ENCODE measurements at regions of chr15 and their contacts with region 1.

Region 1: DNA sequence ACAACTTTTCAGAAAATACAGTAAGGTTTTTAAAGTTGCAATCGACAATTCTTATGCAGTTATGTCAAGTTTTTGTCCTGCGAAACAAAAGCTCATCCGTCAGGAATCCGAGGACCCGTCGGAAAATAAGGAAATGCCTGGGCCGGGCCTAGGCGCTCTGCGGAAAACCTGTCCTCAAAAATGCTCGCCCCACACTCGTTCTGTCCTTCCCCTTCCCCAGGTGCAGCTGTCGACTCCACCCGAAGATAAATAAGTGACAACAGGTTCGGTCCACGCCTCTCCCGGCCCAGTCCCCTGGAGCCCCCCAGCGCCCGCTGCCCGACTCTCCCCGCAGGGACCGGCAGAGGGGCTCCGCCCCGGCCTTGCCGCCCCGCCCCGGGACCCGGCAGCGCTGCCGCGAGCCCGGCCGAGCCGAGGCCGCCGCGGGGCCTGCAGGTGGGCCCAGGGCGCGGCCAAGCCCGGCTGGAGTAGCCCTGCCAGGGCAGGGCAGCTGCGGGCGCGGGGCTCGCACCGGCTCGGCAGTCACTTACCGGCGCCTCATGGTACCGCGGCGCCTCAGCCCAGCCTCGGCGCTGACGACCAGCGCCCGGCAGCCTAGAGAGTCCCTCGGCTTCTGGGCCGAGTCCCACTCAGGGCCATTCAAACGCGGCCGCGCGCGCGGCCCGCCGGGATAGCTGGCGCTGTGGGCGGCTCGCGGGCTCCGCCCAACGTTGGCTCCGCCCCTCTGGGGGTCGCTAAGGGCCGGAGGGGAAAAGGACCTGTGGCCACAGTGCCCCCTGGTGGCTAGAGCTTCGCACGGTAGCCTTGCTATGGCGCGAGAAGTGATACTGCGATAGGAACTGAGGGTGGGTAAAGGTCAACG is at the start of gene KATNBL1:
- DNase-seq: peak; percentile 97
- CTCF ChIP-seq: peak; percentile 92

Region 2: DNA sequence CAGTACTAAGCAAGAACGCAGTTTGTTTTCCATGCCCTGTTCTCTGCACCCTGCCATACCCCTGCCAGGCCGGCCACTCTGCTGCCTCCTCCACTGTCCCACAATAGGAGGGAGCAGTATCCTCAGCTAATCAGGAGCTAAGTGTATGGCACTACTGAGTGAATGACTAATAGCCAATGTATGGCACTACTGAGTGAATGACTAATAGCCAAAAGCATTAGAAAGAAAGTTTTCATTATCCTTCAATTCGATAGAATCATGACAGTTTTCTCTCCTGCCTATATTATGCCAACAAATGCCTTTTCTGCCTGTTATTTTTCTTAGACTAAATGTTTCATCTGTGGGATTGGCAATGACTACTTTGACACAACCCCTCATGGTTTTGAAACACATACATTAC is 348.9 kb before region 1 on chr15:
- in situ Hi-C with region 1: no loop called
- DNase-seq: no peak
- CTCF ChIP-seq: no peak

Region 3: GRCh38 chr15:34064438-34064837 is 145.2 kb before region 1 on chr15:
- in situ Hi-C with region 1: loop called (anchors 5 kb)
- DNase-seq: no peak
- CTCF ChIP-seq: no peak

Region 4: DNA sequence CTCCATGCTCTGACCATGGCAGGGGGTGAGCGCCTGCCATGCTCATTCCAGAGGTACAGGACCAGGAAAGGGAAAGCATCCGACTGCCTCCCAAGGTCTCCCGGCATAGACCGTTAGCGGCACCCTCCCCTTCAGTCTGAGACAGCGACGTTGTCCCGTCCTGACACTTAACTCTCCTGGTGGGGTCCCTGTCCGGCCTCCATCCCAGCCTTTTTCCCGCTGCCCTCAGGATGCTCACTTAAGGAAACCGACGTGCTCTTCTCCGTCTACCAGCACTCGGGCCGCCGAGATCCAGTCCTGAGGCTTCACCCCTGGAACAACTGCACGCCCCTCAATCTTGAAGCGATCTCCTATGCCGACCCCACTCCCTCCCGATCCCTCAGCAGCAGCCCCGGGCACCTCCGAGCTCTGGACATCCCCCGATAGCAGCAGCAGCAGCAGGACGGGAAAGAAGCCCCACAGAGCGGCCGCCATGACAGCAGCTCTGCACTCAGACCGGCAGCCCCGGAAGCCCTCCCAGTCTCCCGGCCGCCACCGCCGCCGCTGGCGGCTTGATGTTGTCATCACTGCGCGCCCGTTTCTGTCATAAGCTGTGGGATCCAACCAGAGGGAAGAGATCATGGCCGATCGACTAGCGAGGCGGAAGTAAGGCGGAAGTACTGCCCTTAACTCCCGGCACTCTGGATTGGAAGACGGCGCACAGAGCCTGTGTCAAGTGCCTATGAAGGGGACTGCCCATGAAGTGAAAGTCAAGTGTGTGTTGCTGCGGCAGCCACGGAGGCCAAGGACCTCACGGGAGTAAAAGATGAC is 108.1 kb before region 1 on chr15 and contains the starts of genes EMC7 and PGBD4:
- in situ Hi-C with region 1: loop called (anchors 10 kb)
- DNase-seq: peak; percentile 92
- CTCF ChIP-seq: no peak

Measured in GM13976 (cell line).